Right ventricle myocardium inferior (tissue), 1 donor: ENCODE measurements at regions of chr2 and their contacts with region 1.

Region 1: DNA sequence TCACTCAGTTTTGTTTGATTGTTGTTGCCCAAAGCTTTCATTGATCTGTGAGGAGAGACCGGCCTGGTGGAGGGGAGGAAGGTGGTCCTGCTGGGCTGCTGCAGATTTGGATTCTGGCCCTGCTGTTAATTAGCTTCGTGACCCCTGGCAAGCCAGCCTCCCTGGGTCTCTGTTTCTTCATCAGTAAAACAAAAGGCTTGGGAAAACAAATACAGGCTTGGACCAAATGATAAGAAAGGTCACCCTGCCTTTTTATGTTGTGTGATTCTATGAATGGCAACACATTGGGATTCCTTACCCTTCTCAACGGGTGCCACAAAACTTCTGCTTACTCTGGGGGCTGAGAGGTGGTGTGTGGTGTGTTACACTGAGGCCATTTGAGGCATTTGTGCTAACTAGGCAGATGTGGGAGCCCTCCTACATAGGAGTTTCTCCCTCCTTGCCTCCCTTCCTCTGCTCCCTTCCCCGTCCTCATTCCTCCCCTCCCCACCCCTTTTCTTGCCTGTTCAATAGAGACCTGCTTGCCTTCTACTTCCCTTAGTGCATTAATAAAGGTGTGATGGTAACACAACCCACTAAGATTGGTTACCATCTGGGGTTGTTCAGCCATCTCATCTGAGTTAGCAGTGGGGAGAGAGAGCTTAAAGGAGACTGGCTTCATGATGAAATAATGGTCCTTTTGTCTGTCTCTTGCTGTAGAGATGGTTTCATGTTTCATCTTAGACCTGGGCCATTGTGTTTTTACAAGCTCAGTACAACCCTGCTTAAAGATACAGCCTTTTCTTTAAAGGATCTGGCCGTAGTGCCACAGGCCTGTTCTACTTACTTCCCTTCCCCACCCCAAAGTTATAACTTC is 96.2 kb downstream of the TANC1 start:
- DNase-seq: no peak
- ATAC-seq: no peak

Region 2: DNA sequence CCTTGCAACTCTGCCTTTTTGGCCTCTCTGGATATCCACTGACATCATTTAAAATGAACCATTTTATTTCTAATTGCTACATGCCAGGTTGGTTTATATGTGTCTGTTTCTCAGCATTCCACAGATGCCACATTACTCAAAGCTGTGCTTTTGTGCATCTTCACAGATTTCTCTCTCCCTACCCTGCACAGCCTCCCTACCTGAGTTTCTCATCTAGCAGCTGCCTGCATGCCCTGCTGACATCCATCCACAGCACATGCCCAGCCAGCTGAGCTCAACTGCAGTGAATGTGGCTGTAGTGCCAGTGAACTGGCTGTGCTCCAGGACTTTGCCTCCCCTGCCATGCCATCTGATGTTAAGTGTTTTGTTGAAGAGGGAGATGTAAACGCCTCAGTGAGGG is 563.4 kb before region 1 on chr2:
- intact Hi-C with region 1: no loop called
- DNase-seq: peak; percentile 77
- ATAC-seq: peak; percentile 77

Region 3: GRCh38 chr2:159083566-159084202 is 19.0 kb after region 1 on chr2:
- intact Hi-C with region 1: loop called (anchors 2 kb)
- DNase-seq: no peak
- ATAC-seq: peak; percentile 32

Region 4: GRCh38 chr2:159098815-159099455 is 34.3 kb after region 1 on chr2:
- intact Hi-C with region 1: loop called (anchors 5 kb)
- DNase-seq: no peak
- ATAC-seq: no peak